OCI-LY7 (cell line): ENCODE measurements at regions of chr2 and their contacts with region 1.

Region 1: DNA sequence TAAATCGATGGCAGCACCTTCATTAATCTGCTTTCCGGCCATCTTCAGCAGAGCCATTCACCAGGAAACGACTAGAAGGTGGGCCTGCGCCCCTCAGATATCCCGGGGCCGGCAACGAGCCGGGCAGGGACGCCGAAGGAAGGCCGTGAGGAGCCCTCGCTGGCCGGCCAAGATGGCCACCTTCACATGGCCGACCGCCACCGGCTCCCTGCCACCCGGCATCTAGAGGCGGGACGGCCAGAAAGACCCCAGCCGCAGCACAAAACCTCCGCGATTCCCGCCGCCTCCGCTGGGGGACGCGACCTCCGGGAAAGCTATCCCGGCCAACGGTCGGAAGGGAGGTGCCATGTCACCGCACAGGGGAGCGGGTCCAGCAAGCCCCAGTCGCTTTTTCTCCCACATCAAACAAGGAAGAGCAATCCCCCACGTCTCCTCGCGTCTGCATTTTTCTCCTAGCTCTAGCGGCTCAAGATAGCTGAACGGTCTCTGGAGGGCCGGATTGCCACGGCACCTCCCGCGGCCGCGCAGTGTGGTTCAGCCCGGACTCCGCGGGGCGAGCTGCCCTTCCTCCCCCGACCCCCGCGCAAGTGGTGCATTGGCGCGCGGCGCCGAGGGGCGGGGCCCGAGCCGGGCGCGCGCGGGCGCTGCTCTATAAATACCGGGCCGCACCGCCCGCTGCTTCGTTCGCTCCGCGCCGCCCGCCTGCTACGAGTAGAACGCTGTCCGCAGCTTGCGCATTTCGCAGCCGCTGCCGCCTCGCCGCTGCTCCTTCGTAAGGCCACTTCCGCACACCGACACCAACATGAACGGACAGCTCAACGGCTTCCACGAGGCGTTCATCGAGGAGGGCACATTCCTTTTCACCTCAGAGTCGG is at the start of gene MAT2A:
- DNase-seq: peak; percentile 95
- H3K4me3 ChIP-seq: peak within 1 kb of the TSS; percentile 100
- H3K27ac ChIP-seq: peak within 1 kb of the TSS; percentile 88
- H3K4me1 ChIP-seq: peaks cover 37% of the 10 kb centered on the region
- CTCF ChIP-seq: peak; percentile 78
- total RNA-seq, gene MAT2A: 336 and 350 TPM in 2 replicates

Region 2: DNA sequence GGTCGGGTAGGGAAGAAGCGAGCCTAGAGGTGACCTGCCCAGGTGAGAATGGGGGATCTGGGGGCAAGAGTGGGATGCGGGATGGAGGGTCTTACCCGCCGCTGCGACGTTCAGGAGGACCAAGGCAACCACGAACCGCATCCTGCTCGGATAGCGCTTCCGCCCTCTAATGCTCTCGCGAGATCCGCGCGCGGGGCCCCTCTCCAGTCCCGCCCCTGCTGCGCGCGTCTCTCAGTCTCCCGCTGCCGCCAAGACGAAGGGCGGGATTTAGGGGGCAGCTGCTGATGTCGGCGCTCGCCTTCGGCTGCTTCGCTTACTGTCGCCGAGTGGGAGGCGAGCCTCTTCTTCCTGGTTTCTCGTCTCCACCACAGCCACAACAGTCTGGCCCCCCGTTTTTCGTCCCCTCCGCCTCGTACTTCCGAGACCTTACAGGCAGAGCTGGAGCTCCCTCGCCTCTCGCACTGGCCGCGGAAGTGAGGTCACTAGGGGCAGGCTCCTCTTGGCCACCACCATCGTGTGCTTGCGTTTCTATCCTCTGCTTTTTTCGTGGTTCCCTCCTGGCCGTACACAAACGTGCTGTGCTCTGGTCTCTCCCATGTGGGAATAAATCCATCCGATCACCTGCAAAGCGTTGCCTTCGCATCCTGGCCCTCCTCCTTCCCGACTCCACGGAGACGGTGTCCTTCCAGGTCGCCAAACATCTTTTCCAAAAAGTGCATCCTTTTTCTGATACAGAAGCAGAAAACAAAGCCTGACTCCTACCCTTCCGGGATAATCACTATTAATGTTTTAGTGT is 210.7 kb before region 1 on chr2 and contains the start of gene TGOLN2:
- CTCF ChIA-PET with region 1: interaction called, 7 read pairs
- POLR2A ChIA-PET with region 1: interaction called, 7 read pairs
- intact Hi-C with region 1: loop called (anchors 2 kb)
- DNase-seq: peak; percentile 96
- H3K4me3 ChIP-seq: peak within 1 kb of the TSS; percentile 93
- H3K27ac ChIP-seq: peak within 1 kb of the TSS; percentile 73
- H3K4me1 ChIP-seq: peaks cover 26% of the 10 kb centered on the region
- CTCF ChIP-seq: no peak
- total RNA-seq, gene TGOLN2: 74.4 and 78.6 TPM in 2 replicates

Region 3: DNA sequence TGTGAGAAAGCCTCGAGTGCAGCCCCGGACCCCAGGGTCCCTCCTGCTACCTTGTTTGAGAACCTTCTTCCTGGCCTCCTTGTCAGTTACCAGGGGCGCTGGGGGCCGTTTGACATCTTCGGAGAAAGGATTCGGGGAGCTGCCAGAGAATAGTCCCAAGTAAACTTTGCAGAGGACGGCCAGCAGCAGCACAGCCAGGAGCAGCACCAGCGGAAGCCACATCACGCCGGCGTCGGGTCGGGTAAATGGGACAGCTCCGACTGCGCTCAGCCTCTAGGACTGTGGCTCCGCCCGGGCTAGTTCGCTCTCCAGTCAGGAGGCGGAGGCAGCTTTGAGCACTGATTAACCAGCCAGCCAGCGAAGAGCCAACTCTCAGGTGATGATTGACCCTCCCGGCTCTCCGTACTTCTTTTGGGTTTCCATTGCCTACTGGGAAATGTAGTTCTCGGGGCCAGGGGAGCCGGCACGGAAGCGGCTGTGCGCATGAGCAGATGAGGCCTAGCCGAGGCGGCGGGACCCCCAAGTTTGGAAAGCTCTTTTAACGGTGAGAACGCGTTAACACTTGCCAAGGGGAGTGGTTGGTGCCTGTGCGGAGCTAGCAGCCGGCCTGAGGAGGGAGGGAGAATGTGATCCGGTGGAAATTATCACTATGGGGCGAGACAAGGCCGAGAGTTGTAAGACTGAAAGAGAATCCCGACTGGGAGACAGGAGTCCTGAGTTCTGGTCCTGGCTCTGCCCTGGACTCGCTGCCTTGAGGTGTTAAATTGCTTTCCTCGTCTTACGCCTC is 184.2 kb before region 1 on chr2 and contains the starts of genes ELMOD3 and RETSAT:
- CTCF ChIA-PET with region 1: no interaction called
- POLR2A ChIA-PET with region 1: no interaction called
- intact Hi-C with region 1: no loop called
- DNase-seq: peak; percentile 99
- H3K4me3 ChIP-seq: peak within 1 kb of the TSS; percentile 75
- H3K27ac ChIP-seq: peak within 1 kb of the TSS; percentile 7
- H3K4me1 ChIP-seq: peaks cover 20% of the 10 kb centered on the region
- CTCF ChIP-seq: no peak
- total RNA-seq, gene ELMOD3: 12.0 and 22.1 TPM in 2 replicates
- total RNA-seq, gene RETSAT: 5.9 and 14.1 TPM in 2 replicates

Region 4: GRCh38 chr2:85437488-85438284 is 101.0 kb before region 1 on chr2:
- CTCF ChIA-PET with region 1: no interaction called
- POLR2A ChIA-PET with region 1: interaction called, 7 read pairs
- intact Hi-C with region 1: loop called (anchors 5 kb)
- DNase-seq: peak; percentile 77
- H3K4me3 ChIP-seq: peak overlapping the region; percentile 32
- H3K27ac ChIP-seq: no peak overlapping the region
- H3K4me1 ChIP-seq: peaks cover 17% of the 10 kb centered on the region
- CTCF ChIP-seq: no peak

Region 5: GRCh38 chr2:85561317-85561979 is 22.7 kb after region 1 on chr2 and contains the start of gene GGCX:
- CTCF ChIA-PET with region 1: no interaction called
- POLR2A ChIA-PET with region 1: interaction called, 29 read pairs
- intact Hi-C with region 1: loop called (anchors 1 kb)
- DNase-seq: peak; percentile 98
- H3K4me3 ChIP-seq: peak within 1 kb of the TSS; percentile 79
- H3K27ac ChIP-seq: peak within 1 kb of the TSS; percentile 65
- H3K4me1 ChIP-seq: peaks cover 30% of the 10 kb centered on the region
- CTCF ChIP-seq: no peak
- total RNA-seq, gene GGCX: 16.5 and 33.3 TPM in 2 replicates

Region 6: GRCh38 chr2:85611705-85612587 is 73.2 kb after region 1 on chr2 and contains the start of gene C2orf68:
- CTCF ChIA-PET with region 1: interaction called, 5 read pairs
- POLR2A ChIA-PET with region 1: interaction called, 7 read pairs
- intact Hi-C with region 1: loop called (anchors 1 kb)
- DNase-seq: peak; percentile 93
- H3K4me3 ChIP-seq: peak within 1 kb of the TSS; percentile 97
- H3K27ac ChIP-seq: peak within 1 kb of the TSS; percentile 55
- H3K4me1 ChIP-seq: peaks cover 25% of the 10 kb centered on the region
- CTCF ChIP-seq: no peak
- total RNA-seq, gene C2orf68: 62.0 and 86.7 TPM in 2 replicates

Region 7: DNA sequence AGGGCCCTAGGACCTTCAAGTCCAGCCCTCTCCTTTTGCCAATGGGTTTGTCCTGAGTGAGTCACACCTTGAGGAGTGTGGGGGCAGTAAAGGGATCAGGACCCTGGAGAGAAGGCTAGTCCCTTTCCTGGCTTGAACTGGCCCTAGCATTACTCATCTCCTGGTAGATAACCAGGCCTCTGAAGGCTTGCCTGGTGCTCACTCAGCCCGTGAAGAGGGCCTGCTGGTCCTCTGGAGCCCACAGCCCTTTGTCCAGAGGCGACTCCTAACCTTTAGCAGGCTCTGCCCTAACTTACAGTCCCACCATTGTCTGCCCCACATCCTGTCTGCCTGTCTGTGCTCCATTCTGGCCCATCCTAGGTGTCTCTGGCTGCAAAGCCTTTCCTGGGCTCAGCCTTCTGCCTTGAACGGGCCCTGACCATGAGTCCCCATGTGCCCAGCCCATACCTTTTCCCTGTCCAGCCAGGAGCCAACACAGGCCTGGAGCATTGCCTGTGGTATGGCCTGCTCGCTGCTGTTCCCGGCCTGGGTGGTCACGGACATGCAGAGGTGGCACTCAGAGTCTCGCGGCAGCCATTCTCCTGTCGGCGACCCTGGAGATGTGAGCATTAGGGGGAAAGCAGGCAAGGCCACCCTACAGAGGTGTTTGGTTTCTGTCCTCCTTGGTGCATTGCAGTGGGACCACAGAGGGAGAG is 124.3 kb after region 1 on chr2:
- CTCF ChIA-PET with region 1: no interaction called
- POLR2A ChIA-PET with region 1: no interaction called
- intact Hi-C with region 1: no loop called
- DNase-seq: no peak
- H3K4me3 ChIP-seq: no peak overlapping the region
- H3K27ac ChIP-seq: no peak overlapping the region
- H3K4me1 ChIP-seq: no peaks in the 10 kb centered on the region
- CTCF ChIP-seq: no peak

Region 8: DNA sequence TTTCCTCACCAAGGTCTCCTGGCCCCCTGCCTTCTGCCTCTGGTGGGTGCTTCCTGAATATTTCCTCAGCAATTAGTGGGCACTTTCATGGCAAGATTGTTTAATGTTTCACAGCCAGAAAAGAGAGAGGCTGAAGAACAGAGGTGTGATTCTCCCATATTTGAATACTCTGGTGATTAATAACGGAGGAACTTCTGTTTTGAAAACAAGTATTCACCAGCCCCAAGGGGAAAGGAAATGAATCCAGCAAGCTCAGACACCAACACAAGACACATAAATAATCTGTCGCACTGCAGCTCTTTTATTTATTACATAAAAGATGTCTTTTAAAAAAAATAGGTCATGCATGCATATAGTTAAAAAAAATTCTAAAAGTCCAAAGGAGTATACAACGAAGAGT is 718.3 kb after region 1 on chr2:
- CTCF ChIA-PET with region 1: no interaction called
- POLR2A ChIA-PET with region 1: no interaction called
- intact Hi-C with region 1: no loop called
- DNase-seq: no peak
- H3K4me3 ChIP-seq: no peak overlapping the region
- H3K27ac ChIP-seq: no peak overlapping the region
- H3K4me1 ChIP-seq: no peaks in the 10 kb centered on the region
- CTCF ChIP-seq: no peak